Dorsolateral prefrontal cortex (tissue), 120 donors: ENCODE measurements at regions of chr12 and their contacts with region 1.

Region 1: DNA sequence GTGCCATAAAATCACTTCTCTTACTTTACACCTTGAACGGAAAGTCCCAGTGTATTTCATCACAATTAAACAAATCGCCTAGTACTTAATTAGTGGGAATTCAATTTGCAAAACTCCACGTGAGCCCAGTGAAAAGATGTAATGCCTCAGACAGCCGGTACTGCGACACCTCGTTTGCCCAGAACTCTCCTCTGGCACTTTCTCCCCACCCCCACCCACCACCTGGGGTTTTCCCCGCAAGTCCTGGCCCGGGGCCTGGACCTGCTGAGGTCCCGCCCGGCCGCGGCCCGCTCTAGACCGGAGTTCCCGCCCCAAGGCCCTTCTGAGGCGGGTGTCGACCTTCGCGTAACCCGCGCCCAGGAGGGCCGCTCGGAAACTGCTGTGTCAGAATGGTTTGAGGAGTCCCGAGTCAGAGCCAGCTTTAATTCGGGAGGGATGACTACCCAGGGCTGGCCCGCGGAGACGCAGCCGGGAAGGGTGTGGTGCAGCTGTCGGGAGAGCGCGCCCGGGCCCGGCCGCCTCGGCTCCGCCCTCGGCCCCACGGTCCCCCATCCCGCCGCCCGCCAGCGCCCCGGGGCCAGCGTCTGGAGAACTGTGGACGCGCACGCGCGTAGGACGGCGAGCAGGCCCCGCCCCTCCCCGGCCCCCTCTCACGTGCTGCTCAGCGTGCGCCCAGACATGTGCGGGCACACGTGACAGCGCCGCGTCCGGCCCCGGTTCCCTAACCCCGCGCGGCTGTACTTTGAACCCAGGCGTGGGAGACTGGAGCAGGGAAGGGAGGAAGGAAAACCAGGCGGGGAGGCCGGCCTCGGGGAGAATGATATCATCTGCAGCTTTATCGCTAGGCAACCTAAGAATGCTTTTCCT is 10.8 kb downstream of the BHLHE41 start:
- DNase-seq: peak; percentile 80 to 92 (median 90)
- H3K4me3 ChIP-seq: peak overlapping the region; percentile 54 to 81 (median 70)
- H3K27ac ChIP-seq: peak overlapping the region; percentile 92 to 100 (median 98)
- H3K27me3 ChIP-seq: no peaks in the 10 kb centered on the region
- CTCF ChIP-seq: peak in 23 of 56 donors; percentile 4 to 48 (median 17)

Region 2: DNA sequence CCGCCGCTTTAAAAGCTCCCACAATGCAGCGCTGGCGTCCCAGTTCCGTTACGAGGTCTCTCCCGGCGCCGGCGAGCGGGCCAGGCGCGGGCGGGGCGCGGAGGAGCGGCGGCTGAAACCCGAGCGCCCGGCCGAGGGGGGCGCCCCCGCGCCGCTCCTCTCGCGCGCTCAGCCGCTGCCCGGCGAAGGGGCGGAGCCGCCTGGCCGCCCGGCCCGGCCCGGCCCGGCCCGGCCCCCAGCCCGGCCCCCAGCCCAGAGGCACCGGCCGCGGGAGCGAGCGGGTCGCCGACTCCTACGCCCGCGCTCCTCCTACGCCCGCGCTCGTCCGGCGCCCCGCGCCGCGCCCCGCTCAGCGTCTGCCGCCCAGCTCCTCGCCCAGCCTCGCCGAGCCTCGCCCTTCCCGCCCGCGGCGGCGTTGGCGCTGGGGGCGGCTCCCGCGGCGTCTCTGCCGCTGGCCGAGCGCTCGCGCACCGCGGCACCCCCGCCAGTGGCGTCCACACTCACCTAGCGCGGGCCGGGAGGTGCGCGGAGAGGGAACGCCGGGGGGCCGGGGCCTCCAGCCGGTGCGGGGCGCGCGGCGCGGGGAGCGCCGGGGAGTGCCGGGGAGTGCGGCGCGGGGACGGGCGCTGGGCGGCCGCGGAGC is 155.5 kb before region 1 on chr12 and contains the start of gene RASSF8:
- intact Hi-C with region 1: loop called in 1 of 2 experiments (anchors 10 kb)
- DNase-seq: peak in 8 of 10 donors; percentile 33 to 85 (median 52)
- H3K4me3 ChIP-seq: peak within 1 kb of the TSS; percentile 69 to 93 (median 81)
- H3K27ac ChIP-seq: peak within 1 kb of the TSS; percentile 79 to 98 (median 96)
- H3K27me3 ChIP-seq: no peaks in the 10 kb centered on the region
- CTCF ChIP-seq: peak in 13 of 56 donors; percentile 1 to 53 (median 32)
- total RNA-seq, gene RASSF8: 29.7 to 147 (median 57.1) TPM

Region 3: GRCh38 chr12:26629864-26630263 is 515.8 kb after region 1 on chr12:
- intact Hi-C with region 1: loop called in 1 of 2 experiments (anchors 5 kb)
- DNase-seq: peak in 3 of 10 donors; percentile 33 to 51 (median 41)
- H3K4me3 ChIP-seq: peak overlapping the region in 15 of 59 donors; percentile 3 to 49 (median 27)
- H3K27ac ChIP-seq: peak overlapping the region in 41 of 59 donors; percentile 2 to 80 (median 50)
- H3K27me3 ChIP-seq: no peaks in the 10 kb centered on the region
- CTCF ChIP-seq: peak in 55 of 56 donors; percentile 38 to 79 (median 61)

Region 4: DNA sequence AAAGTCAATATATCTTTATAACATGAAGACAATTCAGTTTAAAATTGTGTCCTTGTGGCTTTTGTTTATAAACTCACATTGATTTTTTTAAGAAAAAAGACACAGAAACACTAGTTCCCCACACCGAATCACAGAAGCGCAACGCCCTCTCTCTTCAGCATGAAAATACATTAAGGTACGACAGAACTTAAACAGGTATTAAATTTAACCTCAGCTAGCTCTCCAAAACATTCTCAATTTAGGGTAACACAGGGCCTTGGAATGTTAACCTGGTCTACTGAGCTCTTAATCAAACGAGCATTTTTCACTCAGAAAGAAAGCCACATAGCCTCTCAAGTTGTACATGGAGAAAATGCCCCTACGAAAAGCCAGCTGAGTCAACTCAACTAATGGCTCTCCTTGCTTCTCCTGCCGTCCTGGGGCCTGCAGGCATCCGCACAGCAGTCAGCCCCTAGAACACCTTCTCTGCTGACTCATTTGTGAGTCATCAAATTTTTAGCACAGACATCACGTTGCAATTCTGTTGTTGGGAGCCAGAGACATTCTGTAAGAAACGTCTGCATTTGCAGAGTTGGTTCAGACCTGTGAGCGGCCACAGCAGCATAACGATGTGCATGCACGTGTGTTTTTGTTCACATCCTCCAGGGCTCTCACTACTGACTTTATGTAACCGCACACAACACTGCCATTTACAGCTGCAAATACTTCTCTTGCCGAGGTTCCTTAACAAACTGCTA is 577.3 kb after region 1 on chr12:
- intact Hi-C with region 1: loop called in 1 of 2 experiments (anchors 5 kb)
- DNase-seq: peak in 5 of 10 donors; percentile 34 to 46 (median 38)
- H3K4me3 ChIP-seq: peak overlapping the region in 26 of 59 donors; percentile 3 to 53 (median 22)
- H3K27ac ChIP-seq: peak overlapping the region in 8 of 59 donors; percentile 9 to 60 (median 20)
- H3K27me3 ChIP-seq: no peaks in the 10 kb centered on the region
- CTCF ChIP-seq: no peak

Region 5: DNA sequence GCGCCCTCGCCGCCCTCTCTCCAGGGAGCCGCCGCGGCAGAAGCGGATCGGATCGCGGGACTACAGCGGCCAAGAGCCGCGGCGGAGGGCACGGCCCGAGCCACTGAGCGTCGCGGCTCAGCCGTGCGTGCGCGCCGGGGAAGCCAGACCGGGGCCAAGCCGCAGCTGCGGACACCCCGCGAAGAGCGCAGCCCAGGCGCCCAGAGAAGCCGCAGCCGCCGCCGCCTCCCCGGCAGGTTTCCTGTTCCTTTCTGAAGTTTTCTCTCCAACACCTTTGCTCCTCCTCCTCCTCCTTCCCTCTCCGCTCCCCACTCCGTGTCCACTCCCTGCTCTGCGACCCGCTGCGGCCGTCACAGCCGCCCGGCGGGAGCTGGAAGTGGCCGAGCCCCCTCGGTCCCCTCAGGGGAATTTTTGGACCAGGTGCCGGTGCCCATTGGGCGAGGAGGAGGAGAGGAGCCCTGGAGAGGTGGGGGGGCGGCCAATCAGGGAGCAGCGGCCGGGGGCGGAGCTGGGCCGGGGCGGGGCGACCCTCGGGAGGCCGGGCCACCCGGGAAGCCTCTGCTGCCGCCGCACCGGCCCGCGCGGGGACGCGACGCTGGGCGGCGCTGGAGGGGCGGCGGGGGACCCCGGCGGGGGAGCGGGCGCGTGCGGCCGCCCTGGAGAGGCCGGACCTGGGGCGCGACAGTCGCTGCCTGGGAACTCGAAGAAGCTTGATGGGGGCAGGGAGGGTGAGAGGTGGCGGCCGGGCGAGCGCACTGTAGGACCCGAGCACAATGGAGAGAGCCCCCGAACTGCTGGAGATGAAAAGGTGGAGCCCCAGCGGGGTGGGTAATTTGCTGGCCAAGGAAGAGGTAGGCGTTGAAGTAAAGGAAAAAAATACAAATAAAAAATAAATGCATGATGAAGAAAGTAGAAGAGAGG is 719.0 kb after region 1 on chr12 and contains the start of gene ITPR2:
- intact Hi-C with region 1: loop called in 1 of 2 experiments (anchors 10 kb)
- DNase-seq: peak; percentile 73 to 94 (median 86)
- H3K4me3 ChIP-seq: peak within 1 kb of the TSS; percentile 69 to 96 (median 86)
- H3K27ac ChIP-seq: peak within 1 kb of the TSS in 58 of 59 donors; percentile 42 to 99 (median 89)
- H3K27me3 ChIP-seq: no peaks in the 10 kb centered on the region
- CTCF ChIP-seq: peak in 31 of 56 donors; percentile 6 to 66 (median 32)
- total RNA-seq, gene ITPR2: 35.5 to 122 (median 61.5) TPM